ENCODE measurements at regions of chr1 and their contacts with region 1.

Region 1: DNA sequence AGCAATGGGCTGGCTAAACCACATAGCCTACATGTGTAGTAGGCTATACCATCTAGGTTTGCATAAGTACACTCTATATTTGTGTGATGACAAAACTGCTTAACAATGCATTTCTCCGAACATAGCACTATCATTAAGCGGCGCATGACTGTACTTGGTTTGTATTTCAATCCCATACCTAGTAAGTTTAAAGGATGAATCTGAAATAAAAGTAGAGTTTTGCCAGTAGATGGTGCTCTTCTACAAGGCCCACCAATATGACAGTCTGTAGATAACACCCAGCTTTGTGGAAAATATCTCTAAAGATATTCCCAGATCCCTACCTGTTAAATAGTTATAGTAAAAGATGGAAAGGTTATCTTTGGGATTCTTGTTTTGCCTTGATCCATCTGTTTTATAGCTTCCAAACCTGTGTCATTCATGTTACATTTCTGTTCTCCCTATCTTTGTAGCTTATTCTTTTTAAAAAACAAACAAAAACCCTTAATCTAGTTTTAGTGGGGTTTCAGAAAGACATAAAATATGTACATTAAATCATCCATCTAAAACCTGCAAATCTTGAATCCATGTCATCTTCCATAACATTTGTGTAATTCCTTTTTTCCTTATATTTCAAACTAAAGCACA is 33.9 kb upstream of the ASPM start:
- DNase-seq: peak; percentile 57
- H3K27ac ChIP-seq: no peak overlapping the region
- CTCF ChIP-seq: peak; percentile 70

Region 2: DNA sequence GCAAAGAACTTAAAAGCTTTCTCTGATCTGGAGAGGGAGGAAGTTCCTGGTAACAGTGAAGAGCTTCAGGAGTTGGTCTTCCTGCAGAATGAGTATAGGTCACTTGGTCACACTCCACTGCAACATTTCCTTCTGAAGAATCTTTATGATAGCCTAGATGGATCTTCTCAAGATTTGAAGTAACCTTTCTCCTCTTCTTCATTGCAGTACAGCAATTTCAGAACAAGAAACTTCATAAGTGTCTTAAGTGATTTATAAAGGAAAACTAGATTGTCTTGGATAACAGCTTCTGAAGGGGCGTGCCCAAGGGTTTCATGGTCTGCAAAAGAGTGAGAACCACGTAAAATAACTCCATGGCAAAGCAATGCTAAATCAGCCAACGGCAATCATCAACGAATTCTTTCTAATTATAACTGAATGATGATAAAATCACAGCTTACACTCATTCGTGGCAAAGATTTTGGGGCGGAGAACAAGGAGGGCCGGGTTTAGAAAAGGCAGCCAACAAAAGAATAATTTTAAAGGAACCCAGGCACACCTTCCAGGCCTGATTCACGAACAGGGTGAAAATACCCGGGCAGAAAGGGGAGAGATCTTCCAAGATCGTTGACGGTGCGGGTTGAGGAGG is 20.0 kb after region 1 on chr1:
- CTCF ChIA-PET with region 1: no interaction called
- POLR2A ChIA-PET with region 1: no interaction called
- DNase-seq: no peak
- H3K27ac ChIP-seq: peak overlapping the region; percentile 95
- CTCF ChIP-seq: no peak

Region 3: DNA sequence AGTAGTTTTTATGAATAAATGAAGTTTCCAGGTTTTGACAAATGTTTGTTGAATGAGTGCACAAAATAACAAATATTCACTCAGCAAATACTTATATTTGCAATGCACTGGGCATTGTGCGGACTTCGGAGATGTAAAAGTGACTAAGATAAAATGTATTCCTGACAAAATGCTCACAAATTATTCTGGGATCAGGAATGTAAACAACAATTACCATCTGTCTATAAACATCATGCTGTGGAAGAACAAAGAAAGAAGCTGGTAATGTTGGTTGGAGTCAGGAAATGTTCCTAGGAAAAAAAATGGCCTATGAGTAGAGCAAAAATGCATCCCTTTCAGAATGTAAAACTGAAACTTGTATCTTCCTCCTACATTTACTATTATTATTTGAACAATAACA is 156.2 kb after region 1 on chr1:
- CTCF ChIA-PET with region 1: interaction called, 10 read pairs
- POLR2A ChIA-PET with region 1: no interaction called
- DNase-seq: no peak
- H3K27ac ChIP-seq: no peak overlapping the region
- CTCF ChIP-seq: no peak

Region 4: GRCh38 chr1:197356723-197357533 is 176.6 kb after region 1 on chr1:
- CTCF ChIA-PET with region 1: interaction called, 11 read pairs
- POLR2A ChIA-PET with region 1: interaction called, 3 read pairs
- DNase-seq: peak; percentile 45
- H3K27ac ChIP-seq: no peak overlapping the region
- CTCF ChIP-seq: peak; percentile 59